ENCODE measurements at regions of chr16 and their contacts with region 1.

Region 1: DNA sequence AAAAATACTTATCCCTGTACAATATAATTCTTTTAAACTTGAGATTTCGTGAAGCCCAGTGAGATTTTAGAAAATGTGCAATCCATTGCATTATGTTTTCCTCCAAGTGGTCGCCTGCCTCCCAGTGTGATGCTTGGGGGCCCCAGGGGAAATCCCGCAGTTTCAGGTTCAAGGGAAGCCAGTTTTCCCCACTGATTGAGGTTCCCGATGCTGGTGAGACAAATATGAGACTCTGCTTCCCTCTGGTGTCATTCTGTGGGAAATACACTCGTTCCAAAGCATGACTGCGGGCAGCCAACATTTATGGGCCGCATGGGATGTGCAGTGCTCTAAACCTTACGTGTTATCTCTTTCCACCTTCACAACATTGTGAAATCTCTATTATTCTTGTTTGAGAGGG is 200.8 kb downstream of the PRKCB start:
- DNase-seq: no peak
- H3K4me3 ChIP-seq: no peak overlapping the region
- H3K27ac ChIP-seq: no peak overlapping the region
- H3K4me1 ChIP-seq: no peaks in the 10 kb centered on the region
- H3K27me3 ChIP-seq: no peaks in the 10 kb centered on the region
- CTCF ChIP-seq: peak in 1 of 3 donors; percentile 31
- EP300 ChIP-seq: no peak
- POLR2A ChIP-seq: no peak

Region 2: DNA sequence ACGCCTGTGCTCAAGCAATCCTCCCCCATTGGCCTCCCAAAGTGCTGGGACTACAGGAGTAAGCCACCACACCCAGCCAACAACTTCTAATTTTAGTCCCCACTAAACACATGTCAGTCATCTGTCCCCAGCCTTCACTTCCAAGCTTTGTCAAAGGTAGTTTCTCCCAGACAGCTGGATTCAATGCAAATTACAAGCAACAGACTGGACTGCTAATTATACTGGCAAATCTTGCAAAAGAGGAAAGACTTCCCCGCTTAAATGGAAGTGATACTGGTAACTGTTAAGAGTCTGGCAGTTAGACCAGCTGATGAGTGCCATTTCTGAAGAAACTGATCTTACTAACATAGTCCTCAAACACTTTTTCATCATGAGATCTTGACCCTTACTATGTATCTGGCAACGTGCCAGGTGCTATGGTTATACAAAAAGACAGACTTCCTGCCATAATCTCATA is 518.2 kb before region 1 on chr16:
- intact Hi-C with region 1: no loop called
- DNase-seq: no peak
- H3K4me3 ChIP-seq: no peak overlapping the region
- H3K27ac ChIP-seq: no peak overlapping the region
- H3K4me1 ChIP-seq: no peaks in the 10 kb centered on the region
- H3K27me3 ChIP-seq: no peaks in the 10 kb centered on the region
- CTCF ChIP-seq: no peak
- EP300 ChIP-seq: no peak
- POLR2A ChIP-seq: no peak

Region 3: GRCh38 chr16:23729503-23730424 is 306.9 kb before region 1 on chr16:
- intact Hi-C with region 1: loop called in 1 of 4 experiments (anchors 10 kb)
- DNase-seq: no peak
- H3K4me3 ChIP-seq: no peak overlapping the region
- H3K27ac ChIP-seq: no peak overlapping the region
- H3K4me1 ChIP-seq: no peaks in the 10 kb centered on the region
- H3K27me3 ChIP-seq: no peaks in the 10 kb centered on the region
- CTCF ChIP-seq: no peak
- EP300 ChIP-seq: no peak
- POLR2A ChIP-seq: no peak

Region 4: GRCh38 chr16:23803591-23804123 is 233.0 kb before region 1 on chr16:
- intact Hi-C with region 1: loop called in 1 of 4 experiments (anchors 10 kb)
- DNase-seq: peak in 2 of 5 donors; percentile 15 to 36
- H3K4me3 ChIP-seq: no peak overlapping the region
- H3K27ac ChIP-seq: no peak overlapping the region
- H3K4me1 ChIP-seq: no peaks in the 10 kb centered on the region
- H3K27me3 ChIP-seq: no peaks in the 10 kb centered on the region
- CTCF ChIP-seq: no peak
- EP300 ChIP-seq: no peak
- POLR2A ChIP-seq: no peak

Measured in ovary (tissue), 10 donors.